ENCODE measurements at regions of chr3 and their contacts with region 1.

Region 1: DNA sequence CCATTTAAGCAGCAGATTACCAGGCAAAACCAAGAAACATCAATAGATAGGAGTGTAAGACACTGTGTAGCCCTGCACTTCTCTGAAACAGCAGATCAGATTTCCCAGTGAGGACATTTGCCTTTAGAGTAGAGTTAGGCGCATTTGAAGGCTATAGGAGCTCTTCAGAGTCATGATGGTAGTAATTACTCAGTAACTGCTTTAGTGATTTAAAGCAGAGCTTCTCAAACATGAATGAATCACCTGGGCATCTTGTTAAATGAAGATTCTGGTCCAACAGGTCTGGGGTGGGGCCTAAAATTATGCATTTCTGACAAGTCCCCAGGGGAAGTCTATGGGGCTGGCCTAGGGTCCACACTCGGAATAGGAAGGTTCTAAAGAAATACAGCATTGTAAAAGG is 36.9 kb downstream of the THRB start:
- DNase-seq: no peak
- ATAC-seq: no peak
- H3K4me3 ChIP-seq: no peak overlapping the region
- H3K27ac ChIP-seq: no peak overlapping the region
- H3K4me1 ChIP-seq: peaks cover 0 to 24% (median 7%) of the 10 kb centered on the region in 12 donors
- H3K27me3 ChIP-seq: no peaks in the 10 kb centered on the region
- CTCF ChIP-seq: no peak
- POLR2A ChIP-seq: no peak

Region 2: GRCh38 chr3:23129817-23130216 is 1327.9 kb before region 1 on chr3:
- intact Hi-C with region 1: no loop called
- DNase-seq: no peak
- ATAC-seq: no peak
- H3K4me3 ChIP-seq: peak overlapping the region in 1 of 12 donors; percentile 20
- H3K27ac ChIP-seq: no peak overlapping the region
- H3K4me1 ChIP-seq: peaks cover 0 to 15% (median 5%) of the 10 kb centered on the region in 12 donors
- H3K27me3 ChIP-seq: no peaks in the 10 kb centered on the region
- CTCF ChIP-seq: no peak
- POLR2A ChIP-seq: no peak

Region 3: GRCh38 chr3:24211381-24211780 is 246.4 kb before region 1 on chr3:
- intact Hi-C with region 1: no loop called
- DNase-seq: no peak
- ATAC-seq: no peak
- H3K4me3 ChIP-seq: no peak overlapping the region
- H3K27ac ChIP-seq: no peak overlapping the region
- H3K4me1 ChIP-seq: peaks cover 0 to 30% (median 17%) of the 10 kb centered on the region in 12 donors
- H3K27me3 ChIP-seq: no peaks in the 10 kb centered on the region
- CTCF ChIP-seq: no peak
- POLR2A ChIP-seq: no peak

Region 4: DNA sequence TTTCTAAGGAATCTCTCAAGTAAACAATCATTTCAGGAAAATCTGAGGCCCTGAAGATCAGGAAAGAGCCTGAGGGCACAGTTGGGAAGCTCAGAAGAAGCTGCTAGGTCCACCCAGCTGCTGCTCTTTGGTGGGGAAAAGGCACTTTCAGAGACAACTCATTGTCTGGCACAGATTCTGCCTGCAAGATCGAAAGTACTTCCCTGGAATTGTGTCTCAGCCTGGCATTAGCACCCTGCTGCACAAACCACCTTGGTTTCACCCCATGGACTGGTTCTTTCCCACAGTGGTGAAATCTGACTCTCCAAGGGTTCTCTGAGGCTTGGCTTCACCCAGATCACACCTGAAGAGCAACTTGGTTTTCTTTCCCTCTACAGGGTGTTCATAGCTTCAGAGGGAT is 18.2 kb after region 1 on chr3:
- intact Hi-C with region 1: loop called in 1 of 10 experiments (anchors 2 kb)
- DNase-seq: no peak
- ATAC-seq: peak in 1 of 4 donors; percentile 44
- H3K4me3 ChIP-seq: no peak overlapping the region
- H3K27ac ChIP-seq: no peak overlapping the region
- H3K4me1 ChIP-seq: peaks cover 0 to 29% (median 3%) of the 10 kb centered on the region in 12 donors
- H3K27me3 ChIP-seq: no peaks in the 10 kb centered on the region
- CTCF ChIP-seq: no peak
- POLR2A ChIP-seq: no peak